ENCODE measurements at regions of chr11 and their contacts with region 1.

Region 1: DNA sequence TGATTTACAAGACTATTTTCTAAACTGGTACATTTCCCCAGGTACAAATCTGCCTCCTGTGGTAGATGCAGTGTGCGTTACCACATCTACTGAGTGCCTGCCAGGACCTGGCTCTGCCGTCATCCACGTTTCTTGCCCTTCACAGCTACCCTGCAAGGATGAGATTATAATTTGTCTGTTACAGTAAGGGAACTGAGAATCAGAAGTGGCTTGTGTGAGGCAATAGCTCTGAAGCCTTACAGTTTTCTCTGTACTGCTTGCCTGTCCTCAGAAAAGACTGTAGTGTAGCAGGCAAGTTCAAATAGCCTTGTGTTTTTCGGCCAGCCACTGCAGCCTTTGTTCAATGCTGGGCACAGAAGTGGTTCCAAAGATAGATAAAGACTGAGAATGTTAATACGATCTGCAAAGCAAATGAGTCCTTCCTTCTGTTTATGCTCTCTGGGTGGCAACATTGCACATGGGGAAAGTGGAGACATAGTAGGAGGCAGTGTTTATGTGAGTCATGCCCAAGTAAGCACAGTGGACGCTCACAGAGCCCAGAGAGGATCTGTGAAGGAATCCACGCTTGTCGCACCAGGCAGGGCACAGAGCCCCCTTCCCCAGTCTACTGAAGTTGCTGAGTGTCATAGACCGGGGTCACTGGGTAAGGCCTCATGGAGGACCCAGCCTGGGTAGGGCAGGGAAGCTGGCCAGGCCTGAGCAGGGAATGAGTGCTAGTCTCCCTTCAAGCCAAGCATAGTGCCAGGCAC is 49.1 kb downstream of the MICAL2 start:
- DNase-seq: peak; percentile 56 to 75
- H3K4me3 ChIP-seq: peak overlapping the region in 1 of 2 donors; percentile 2
- H3K27ac ChIP-seq: peak overlapping the region; percentile 91 to 93
- H3K4me1 ChIP-seq: peaks cover 13 to 100% (median 86%) of the 10 kb centered on the region in 4 donors
- H3K27me3 ChIP-seq: no peaks in the 10 kb centered on the region
- CTCF ChIP-seq: no peak

Region 2: DNA sequence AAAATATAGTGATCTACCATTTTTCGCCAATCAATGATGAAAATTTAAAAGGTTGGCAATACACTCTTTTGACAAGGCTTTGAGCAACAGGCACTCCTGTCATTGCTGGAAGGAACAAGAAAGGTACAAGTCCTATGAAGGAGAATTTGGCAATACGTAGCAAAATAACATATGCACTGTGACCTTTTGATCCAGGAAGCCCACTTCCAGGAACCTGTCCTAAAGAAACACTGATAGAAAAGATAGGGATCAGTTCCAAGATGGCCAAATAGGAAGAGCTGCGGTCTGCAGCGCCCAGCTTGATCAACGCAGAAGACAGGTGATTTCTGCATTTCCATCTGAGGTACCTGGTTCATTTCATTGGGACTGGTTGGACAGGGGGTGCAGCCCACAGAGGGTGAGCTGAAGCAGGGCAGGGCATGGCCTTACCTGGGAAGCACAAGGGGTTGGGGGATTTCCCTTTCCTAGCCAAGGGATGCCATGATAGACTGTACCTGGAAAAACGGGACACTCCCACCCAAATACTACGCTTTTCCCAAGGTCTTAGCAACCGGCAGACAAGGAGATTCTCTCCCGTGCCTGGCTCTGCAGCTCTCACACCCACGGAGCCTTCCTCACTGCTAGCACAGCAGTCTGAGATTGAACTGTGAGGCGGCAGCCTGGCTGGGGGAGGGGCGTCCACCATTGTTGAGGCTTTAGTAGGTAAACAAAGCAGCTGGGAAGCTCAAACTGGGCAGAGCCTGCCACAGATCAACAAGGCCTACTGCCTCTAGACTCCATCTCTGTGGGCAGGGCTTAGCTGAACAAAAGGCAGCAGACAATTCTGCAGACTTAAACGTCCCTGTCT is 468.0 kb before region 1 on chr11:
- intact Hi-C with region 1: no loop called
- DNase-seq: no peak
- H3K4me3 ChIP-seq: no peak overlapping the region
- H3K27ac ChIP-seq: no peak overlapping the region
- H3K4me1 ChIP-seq: no peaks in the 10 kb centered on the region
- H3K27me3 ChIP-seq: no peaks in the 10 kb centered on the region
- CTCF ChIP-seq: no peak

Region 3: DNA sequence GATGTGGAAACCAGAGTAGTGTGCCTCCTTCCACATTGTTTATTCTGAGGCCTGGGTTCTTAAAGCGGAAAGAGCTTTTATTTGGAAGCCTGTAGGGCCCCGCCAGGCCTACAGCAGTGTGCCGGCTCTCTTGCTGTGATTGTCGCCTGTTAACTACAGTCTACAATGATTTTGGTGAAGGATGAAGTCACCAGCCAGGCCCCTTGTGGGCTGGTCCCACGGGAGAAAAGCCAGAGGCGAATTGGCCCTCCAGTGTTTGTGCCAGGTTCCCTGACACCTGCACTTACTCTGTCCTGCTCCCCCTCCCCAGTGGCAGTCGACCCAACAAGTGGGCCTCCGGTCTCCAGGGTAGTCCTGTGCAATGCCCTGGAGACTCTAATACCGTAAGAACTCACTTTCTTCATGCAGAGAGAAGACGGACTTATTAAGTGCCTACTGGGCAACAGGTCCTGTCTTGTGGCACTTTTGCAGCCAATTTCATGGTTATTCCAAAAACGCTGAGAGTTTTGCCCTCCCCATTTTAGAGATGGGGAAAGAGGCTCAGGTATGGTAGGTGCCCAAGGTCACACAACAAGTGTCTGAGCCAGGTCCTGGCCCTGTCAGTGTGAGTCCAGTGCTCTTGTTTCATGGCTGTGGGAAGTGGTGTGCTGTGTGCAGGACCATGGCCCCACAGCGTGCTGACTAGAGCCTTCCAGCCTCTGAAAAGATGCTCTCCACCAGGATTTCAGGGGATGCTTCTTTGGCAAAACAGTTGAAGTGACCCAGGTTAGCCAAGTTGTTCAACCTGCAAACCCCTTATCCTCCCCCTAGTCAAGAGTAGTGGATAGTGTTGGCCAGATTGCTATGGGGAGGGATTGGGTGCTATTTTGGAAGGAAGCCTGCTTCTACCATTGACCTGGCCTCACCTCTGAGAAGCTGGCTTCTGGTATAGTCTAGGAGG is 47.7 kb before region 1 on chr11:
- intact Hi-C with region 1: loop called (anchors 2 kb)
- DNase-seq: peak; percentile 41 to 82
- H3K4me3 ChIP-seq: peak overlapping the region; percentile 89 to 95
- H3K27ac ChIP-seq: peak overlapping the region; percentile 94 to 99
- H3K4me1 ChIP-seq: peaks cover 0 to 63% (median 36%) of the 10 kb centered on the region in 4 donors
- H3K27me3 ChIP-seq: no peaks in the 10 kb centered on the region
- CTCF ChIP-seq: peak in 1 of 2 experiments; percentile 3

Region 4: GRCh38 chr11:12235947-12236743 is 76.6 kb after region 1 on chr11:
- intact Hi-C with region 1: loop called (anchors 10 kb)
- DNase-seq: peak; percentile 64 to 79
- H3K4me3 ChIP-seq: no peak overlapping the region
- H3K27ac ChIP-seq: peak overlapping the region; percentile 77 to 86
- H3K4me1 ChIP-seq: peaks cover 6 to 91% (median 59%) of the 10 kb centered on the region in 4 donors
- H3K27me3 ChIP-seq: no peaks in the 10 kb centered on the region
- CTCF ChIP-seq: peak; percentile 68 to 82

Measured in tibial artery (tissue), 4 donors.